Naive thymus-derived CD8-positive, alpha-beta T cell (primary cell): ENCODE measurements at regions of chr12 and their contacts with region 1.

Region 1: DNA sequence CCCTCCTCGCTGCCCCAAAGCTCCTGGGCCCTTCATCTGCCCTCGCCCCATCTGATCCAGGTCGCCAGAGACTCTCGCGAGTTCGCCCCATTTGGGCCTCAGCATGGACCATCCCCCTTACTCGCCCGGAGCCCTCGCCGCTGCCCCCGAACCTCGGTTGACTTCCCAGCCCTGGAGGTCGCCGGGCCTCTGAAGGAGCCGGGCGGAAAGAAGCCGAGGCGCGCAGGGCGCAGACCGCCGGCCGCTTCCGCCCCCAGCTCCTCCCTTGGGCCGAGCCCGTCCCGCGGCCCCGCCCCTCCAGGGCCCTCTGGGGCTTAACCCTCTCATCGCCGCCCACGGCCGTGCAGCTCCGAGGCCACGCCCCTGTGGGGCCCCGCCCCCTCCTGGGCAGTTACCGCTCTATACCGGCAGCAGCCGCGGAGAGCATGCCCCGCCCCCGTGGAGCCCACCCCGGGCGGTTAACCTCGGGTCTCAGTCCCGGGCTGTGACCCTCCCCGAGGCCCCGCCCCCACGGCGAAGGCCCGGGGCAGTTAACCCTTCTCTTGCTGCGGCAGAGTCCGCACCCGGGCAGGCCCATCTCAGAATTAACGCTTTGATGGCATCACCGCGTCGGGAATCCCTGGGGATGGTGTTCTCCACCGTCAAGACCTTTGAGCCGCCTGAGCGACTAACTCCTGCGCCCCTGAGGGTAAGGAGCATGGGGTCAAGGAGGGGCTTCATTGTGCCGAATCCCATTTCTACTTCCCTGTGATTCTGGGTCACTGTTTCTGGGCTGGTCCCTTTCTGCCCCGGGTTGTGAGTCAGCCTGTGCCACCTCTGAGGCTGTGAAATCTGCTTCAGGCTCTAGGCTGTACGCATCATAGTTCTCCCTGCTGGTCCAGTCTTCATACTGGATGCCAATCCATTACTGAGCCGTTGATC is at the start of gene SPSB2:
- DNase-seq: peak; percentile 95 to 100 (median 98)
- ATAC-seq: peak; percentile 77 to 90
- H3K4me3 Mint-ChIP-seq: peak within 1 kb of the TSS; percentile 84 to 97 (median 90)
- H3K27ac Mint-ChIP-seq: peak within 1 kb of the TSS; percentile 80 to 95 (median 90)
- H3K4me1 Mint-ChIP-seq: peaks cover 37 to 53% (median 49%) of the 10 kb centered on the region in 4 donors
- H3K27me3 Mint-ChIP-seq: no peaks in the 10 kb centered on the region
- polyA plus RNA-seq, gene SPSB2: 10.1 to 10.6 (median 10.2) TPM

Region 2: DNA sequence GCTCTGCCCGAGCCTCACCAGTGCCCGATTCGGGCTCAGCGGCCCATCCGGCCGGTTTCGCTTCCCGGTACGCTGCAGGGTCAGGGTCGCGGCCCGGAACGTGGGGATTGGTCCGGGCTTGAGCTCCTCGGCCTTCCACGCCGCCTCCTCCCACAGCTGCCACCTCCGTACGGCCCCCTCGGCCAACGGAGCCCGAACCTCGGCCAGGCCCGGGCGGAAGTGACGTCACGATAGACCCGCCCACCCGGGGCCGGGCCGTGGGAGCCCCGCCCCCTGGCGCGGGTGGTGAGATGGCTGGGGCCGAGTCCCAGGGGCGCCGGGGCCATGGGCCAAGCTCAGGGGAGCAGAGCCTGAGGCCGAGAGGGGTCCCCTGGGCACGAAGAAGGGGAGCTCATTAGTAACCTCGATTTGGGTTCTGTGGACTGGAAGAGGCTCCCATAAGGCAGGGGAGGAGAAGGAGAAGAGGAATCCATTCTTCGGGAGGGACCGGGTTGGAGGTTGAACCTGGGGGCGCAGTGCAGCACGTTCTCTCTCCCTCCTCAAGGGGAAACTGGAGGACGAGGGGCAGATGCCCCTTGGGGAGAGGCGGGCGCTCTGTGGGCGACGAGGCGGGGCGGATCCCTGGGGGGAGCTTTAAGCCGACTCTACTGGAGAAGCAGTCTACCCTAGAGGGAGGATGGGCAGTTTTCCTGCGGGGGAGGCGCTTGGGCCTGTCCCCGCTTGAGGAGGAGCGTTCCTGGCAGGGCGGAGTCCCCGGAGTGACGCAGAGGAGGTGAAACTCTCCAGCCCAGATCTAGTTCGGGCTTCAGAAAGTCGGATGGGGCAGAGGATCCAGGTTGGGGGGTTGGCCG is 120.2 kb before region 1 on chr12 and contains the start of gene MLF2:
- POLR2A ChIA-PET with region 1: interaction called, 10 read pairs
- DNase-seq: peak; percentile 93 to 98 (median 96)
- ATAC-seq: peak; percentile 92 to 95
- H3K4me3 Mint-ChIP-seq: peak within 1 kb of the TSS; percentile 92 to 98 (median 94)
- H3K27ac Mint-ChIP-seq: peak within 1 kb of the TSS; percentile 95 to 100 (median 98)
- H3K4me1 Mint-ChIP-seq: peaks cover 11 to 36% (median 24%) of the 10 kb centered on the region in 4 donors
- H3K27me3 Mint-ChIP-seq: peaks cover 0 to 2% (median 0%) of the 10 kb centered on the region in 5 donors
- polyA plus RNA-seq, gene MLF2: 98.5 to 133 (median 126) TPM

Region 3: GRCh38 chr12:6843118-6843902 is 30.0 kb before region 1 on chr12:
- POLR2A ChIA-PET with region 1: no interaction called
- DNase-seq: no peak
- ATAC-seq: no peak
- H3K4me3 Mint-ChIP-seq: no peak overlapping the region
- H3K27ac Mint-ChIP-seq: no peak overlapping the region
- H3K4me1 Mint-ChIP-seq: no peaks in the 10 kb centered on the region
- H3K27me3 Mint-ChIP-seq: no peaks in the 10 kb centered on the region

Region 4: GRCh38 chr12:6890789-6891645 is 17.7 kb after region 1 on chr12:
- POLR2A ChIA-PET with region 1: interaction called, 88 read pairs
- DNase-seq: peak; percentile 92 to 100 (median 97)
- ATAC-seq: peak; percentile 94 to 95
- H3K4me3 Mint-ChIP-seq: peak overlapping the region; percentile 77 to 90 (median 84)
- H3K27ac Mint-ChIP-seq: peak overlapping the region; percentile 88 to 96 (median 94)
- H3K4me1 Mint-ChIP-seq: peaks cover 0 to 17% (median 15%) of the 10 kb centered on the region in 4 donors
- H3K27me3 Mint-ChIP-seq: no peaks in the 10 kb centered on the region

Region 5: DNA sequence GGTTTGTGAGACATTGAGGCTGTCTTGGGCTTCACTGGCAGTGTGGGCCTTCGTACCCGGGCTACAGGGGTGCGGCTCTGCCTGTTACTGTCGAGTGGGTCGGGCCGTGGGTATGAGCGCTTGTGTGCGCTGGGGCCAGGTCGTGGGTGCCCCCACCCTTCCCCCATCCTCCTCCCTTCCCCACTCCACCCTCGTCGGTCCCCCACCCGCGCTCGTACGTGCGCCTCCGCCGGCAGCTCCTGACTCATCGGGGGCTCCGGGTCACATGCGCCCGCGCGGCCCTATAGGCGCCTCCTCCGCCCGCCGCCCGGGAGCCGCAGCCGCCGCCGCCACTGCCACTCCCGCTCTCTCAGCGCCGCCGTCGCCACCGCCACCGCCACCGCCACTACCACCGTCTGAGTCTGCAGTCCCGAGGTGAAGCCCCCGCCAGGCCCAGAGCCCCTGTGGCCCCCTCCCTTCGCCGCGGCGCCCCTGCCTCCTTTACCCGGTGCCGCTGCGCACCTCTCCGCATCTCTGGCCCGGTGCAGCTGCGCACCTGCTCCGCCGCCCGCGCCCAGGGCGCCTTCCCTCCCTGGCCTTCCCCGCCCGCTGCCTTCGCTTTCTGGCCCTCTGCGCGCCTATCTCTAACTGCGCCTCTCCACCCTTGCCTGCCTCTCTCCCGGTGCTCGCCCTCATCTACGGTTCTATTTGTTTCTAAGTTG is 41.0 kb after region 1 on chr12 and contains the start of gene ENO2:
- POLR2A ChIA-PET with region 1: interaction called, 33 read pairs
- DNase-seq: peak; percentile 77 to 93 (median 82)
- ATAC-seq: peak; percentile 89 to 92
- H3K4me3 Mint-ChIP-seq: peak within 1 kb of the TSS; percentile 91 to 97 (median 94)
- H3K27ac Mint-ChIP-seq: peak within 1 kb of the TSS; percentile 87 to 98 (median 95)
- H3K4me1 Mint-ChIP-seq: peaks cover 16 to 52% (median 27%) of the 10 kb centered on the region in 4 donors
- H3K27me3 Mint-ChIP-seq: no peaks in the 10 kb centered on the region
- polyA plus RNA-seq, gene ENO2: 19.4 to 29.2 (median 19.7) TPM

Region 6: GRCh38 chr12:6944381-6945186 is 71.2 kb after region 1 on chr12:
- POLR2A ChIA-PET with region 1: interaction called, 48 read pairs
- DNase-seq: peak; percentile 65 to 94 (median 84)
- ATAC-seq: peak; percentile 49 to 55
- H3K4me3 Mint-ChIP-seq: peak overlapping the region; percentile 93 to 99 (median 98)
- H3K27ac Mint-ChIP-seq: peak overlapping the region; percentile 97 to 100 (median 99)
- H3K4me1 Mint-ChIP-seq: peaks cover 32 to 78% (median 66%) of the 10 kb centered on the region in 4 donors
- H3K27me3 Mint-ChIP-seq: no peaks in the 10 kb centered on the region

Region 7: DNA sequence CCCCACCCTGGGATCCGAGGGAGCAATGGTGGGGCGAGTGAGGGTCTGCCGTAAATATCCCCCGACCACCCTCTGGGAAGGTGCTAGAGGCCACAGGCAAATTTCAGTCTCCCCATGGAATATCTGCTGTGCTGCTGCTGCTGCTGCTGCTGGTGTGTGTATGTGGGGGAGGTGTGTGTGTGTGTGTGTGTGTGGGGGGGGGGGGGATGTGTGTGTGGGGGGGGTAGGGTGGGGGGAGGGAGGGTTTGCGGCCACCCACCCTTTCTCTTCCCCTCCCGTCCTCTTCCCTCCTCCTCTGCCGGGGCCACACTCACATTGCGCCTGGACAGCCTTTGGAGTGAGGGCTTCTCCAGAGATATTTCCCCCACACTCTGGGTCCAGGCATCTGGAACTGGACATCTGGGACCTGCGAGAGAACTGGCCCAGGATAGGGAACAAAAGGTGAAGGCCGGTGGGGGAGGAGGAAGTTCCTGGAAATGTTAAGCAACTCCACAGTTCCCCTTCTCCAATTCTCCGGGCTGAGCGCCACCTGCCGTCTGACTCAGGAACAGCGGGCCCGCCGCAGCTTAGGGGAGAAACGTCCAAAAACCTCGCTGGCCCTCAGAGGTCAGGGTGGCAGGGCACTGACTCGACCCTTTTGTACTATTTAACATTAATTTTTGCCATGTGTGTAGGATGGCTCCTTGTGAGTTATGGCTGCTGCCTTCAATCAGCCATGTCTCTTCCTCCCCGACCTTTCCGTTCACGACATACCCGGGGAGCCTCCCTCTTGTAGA is 235.6 kb after region 1 on chr12 and contains the start of gene C1RL:
- POLR2A ChIA-PET with region 1: interaction called, 18 read pairs
- DNase-seq: peak; percentile 34 to 86 (median 74)
- ATAC-seq: peak; percentile 35 to 38
- H3K4me3 Mint-ChIP-seq: peak within 1 kb of the TSS; percentile 90 to 96 (median 94)
- H3K27ac Mint-ChIP-seq: peak within 1 kb of the TSS; percentile 89 to 97 (median 94)
- H3K4me1 Mint-ChIP-seq: peaks cover 26 to 51% (median 46%) of the 10 kb centered on the region in 4 donors
- H3K27me3 Mint-ChIP-seq: no peaks in the 10 kb centered on the region
- polyA plus RNA-seq, gene C1RL: 3.7 to 5.7 (median 4.8) TPM

Region 8: DNA sequence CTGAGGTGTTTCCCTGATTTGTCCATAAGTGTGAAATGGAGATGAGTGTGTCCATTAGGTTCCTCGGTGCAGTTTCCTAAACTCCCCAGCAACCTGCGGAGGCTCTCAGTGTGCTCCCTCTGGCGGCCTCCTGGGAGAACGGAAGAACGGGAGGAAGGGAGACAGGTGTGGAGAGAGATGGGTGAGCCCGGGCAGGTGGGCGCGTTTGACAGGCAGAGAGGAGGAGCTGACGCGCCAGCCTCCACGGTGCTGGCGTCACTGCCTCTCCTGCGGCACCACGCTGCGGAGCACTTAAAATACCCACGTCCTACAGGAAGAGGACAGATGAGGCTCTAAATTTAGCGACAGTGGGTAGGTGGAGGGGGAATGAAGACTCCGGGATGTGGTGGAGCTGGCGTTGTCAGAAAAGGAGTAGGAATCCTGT is 289.3 kb after region 1 on chr12:
- POLR2A ChIA-PET with region 1: no interaction called
- DNase-seq: peak in 6 of 10 donors; percentile 4 to 32 (median 16)
- ATAC-seq: peak; percentile 70 to 93
- H3K4me3 Mint-ChIP-seq: peak overlapping the region; percentile 47 to 79 (median 66)
- H3K27ac Mint-ChIP-seq: peak overlapping the region in 3 of 10 donors; percentile 8 to 83 (median 64)
- H3K4me1 Mint-ChIP-seq: peaks cover 5 to 10% (median 8%) of the 10 kb centered on the region in 4 donors
- H3K27me3 Mint-ChIP-seq: peaks cover 6 to 21% (median 17%) of the 10 kb centered on the region in 5 donors